Activated CD4-positive, alpha-beta T cell treated with anti-CD3 and anti-CD28 coated beads, Interleukin-2, amount 10 ng/mL, durations not matched to agents 24 days and 14 days (primary cell): ENCODE measurements at regions of chr3 and their contacts with region 1.

Region 1: DNA sequence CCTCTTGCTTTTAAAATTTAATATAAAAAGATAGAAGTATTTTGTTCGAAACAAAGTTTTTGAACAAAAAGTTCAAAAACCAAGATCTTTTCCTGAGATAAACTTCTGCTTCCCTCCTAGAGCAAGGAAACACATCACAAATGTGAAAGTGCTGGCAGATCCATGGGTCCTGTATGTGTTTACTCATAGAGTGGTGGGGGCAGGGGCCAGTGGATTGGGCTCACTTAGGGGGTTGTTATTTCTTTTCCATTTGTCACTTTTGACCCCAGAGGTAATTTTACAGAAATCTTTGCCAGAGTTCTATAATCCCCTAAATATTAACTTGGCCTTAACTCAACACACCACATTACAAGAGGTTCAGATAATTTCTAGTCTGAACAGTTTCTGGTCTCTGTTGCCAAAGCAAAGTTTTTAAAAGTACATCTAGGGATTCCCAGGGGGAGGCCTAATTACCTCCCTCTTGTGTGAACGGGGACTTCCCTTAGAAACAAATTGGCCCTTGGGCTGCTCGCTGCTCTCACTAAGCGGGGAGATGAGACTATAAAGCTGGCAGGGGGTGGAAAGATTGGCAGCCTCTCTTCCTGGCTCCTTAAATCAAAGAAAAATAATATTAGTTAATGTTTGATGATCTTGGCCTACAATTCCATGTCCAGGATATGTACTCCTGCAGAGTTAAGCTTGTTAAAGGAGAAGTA is 66.8 kb upstream of the PTX3 start:
- DNase-seq: no peak
- H3K4me3 Mint-ChIP-seq: no peak overlapping the region
- H3K27ac Mint-ChIP-seq: no peak overlapping the region
- H3K4me1 Mint-ChIP-seq: no peaks in the 10 kb centered on the region
- H3K27me3 Mint-ChIP-seq: peaks cover 2% of the 10 kb centered on the region

Region 2: DNA sequence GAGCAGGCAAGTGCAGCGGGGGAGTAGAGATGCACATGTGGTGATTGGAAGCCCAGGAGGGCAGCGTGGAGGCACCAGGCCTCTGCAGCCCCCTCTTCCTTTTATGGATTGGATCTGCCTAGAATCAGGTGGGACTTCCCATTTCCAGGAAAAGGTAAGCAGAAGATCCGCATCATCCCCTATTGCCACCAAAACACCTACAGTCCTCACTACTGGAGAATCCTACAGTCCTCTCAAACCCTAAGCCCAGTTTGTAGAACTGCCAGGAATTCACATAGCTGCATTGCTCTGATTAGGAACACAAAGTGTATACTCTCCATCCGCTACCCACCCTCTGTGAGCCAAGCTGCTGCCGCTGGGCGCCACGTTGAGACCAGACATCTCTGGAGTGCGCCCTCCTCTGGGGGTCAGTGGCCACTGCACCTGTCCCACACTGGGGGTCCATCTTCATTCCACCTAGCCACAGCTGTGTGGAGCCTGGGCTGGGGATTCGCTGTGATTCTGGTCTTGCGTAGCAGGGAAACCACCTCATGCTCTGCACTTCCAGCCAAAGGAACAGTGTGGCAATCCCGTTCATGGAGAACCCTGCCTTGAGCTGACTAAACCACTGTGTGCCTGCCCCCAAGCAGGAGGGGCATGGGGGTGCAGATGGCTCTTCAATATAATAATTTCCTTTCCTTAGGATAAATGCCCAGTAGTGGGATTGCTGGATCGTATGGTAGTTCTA is 22.1 kb before region 1 on chr3:
- intact Hi-C with region 1: loop called (anchors 2 kb)
- DNase-seq: no peak
- H3K4me3 Mint-ChIP-seq: no peak overlapping the region
- H3K27ac Mint-ChIP-seq: no peak overlapping the region
- H3K4me1 Mint-ChIP-seq: no peaks in the 10 kb centered on the region
- H3K27me3 Mint-ChIP-seq: no peaks in the 10 kb centered on the region